Activated CD4-positive, alpha-beta T cell treated with anti-CD3 and anti-CD28 coated beads, Interleukin-2, amount 10 ng/mL, durations not matched to agents 24 days and 14 days (primary cell): ENCODE measurements at regions of chr9 and their contacts with region 1.

Region 1: DNA sequence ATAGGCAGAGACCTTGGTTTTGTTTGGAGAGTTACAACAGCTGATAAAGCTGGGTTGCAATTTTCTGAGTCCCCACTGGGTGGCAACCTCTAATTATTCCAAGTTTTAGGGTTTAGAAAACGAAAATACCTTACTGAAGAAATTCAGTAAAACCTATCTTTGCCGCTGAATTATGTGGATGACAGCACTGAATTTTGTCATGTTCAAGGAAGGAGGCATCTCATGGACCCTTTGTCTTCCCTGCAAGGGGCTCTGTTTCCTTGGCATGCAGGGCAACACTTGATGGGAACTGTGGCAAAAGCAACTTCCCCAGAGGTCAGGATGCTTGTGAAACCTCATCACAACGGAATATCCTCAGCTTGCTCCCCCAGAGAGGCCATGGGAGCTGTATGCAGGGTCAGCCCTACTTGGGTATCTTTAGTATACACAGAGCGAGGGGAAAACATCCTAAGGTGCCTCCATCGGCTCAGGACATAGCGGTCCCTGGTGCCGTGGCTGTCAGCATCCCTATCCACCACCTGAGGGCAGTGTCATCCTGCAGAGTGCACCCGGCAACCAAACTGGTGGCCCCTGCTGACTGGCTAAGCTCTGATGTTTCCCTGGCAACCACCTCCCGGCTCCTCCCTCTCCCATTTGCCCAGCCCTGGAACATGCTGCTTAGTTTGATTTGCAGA is 123.1 kb downstream of the RXRA start:
- DNase-seq: peak; percentile 91
- H3K4me3 Mint-ChIP-seq: no peak overlapping the region
- H3K27ac Mint-ChIP-seq: no peak overlapping the region
- H3K4me1 Mint-ChIP-seq: no peaks in the 10 kb centered on the region
- H3K27me3 Mint-ChIP-seq: peaks cover 3% of the 10 kb centered on the region

Region 2: DNA sequence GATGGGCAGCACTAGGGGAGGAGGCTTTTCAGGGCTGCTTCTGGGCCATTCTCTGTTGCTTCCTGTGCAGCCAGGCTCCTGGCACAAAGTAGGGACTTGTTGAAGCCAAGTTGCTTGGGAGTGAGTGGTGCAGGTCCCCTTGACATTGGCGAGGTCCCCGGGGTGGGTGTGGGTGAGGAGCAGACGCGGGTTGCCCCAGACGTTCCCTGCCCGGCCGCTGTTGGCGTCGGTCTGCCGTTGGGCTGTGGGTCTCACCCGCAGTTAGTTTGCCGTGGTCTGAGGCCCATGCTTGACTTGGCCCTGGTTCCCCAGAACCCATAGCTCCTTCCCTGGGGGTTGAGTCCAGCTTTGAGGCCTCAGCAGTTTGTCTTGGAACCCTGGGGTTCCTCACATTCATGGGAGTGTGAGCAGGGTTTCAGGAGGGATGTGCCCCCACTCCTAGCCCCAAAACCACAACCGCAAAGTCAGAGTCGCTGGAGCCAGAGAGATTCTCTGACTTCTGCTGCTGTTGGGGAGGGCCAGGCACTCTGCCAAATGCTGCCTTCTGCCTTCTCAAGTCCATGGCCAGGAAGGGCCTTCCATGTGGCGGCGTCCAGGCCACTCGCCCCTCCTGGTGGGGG is 45.6 kb before region 1 on chr9:
- intact Hi-C with region 1: no loop called
- DNase-seq: peak; percentile 69
- H3K4me3 Mint-ChIP-seq: no peak overlapping the region
- H3K27ac Mint-ChIP-seq: no peak overlapping the region
- H3K4me1 Mint-ChIP-seq: peaks cover 25% of the 10 kb centered on the region
- H3K27me3 Mint-ChIP-seq: peaks cover 12% of the 10 kb centered on the region

Region 3: DNA sequence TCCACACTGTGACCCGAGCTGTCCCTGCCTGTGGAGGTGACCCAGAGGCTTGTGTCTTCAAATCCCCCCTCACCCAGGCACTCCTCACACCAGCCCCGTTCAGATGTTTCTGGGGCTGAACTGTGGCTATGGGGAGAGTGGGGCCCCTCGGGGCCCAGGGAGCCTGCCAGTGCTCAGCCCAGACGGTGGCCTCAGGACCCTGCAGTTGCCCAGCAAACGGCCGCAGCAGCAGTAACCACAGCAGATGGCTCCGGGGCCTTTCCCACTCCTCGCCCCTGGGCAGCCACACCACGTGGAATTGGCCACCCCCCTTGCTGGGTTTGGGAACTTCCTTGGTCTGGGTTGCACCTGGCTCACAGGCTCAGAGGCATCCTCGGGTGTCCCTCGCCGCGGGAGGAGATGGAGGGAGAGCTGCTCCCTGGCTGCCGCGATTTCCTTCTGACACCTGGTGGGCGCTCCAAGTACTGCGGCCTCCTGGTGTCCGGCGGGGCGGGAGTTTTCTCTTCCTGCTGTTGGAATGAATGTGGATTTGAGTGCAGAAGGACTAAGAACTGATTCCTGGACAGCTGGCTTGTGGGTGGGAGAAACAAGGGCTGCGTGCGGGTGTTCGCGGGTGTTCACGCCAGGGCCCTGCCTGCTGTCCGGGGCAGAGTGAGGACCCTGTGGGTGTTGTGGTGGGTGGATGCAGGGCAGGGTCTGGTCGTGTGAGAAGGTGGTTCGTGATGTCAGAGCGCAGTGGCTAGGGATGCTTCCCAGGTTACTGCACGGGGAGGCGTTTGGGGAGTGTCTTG is 289.7 kb after region 1 on chr9:
- intact Hi-C with region 1: loop called (anchors 5 kb)
- DNase-seq: peak; percentile 77
- H3K4me3 Mint-ChIP-seq: no peak overlapping the region
- H3K27ac Mint-ChIP-seq: no peak overlapping the region
- H3K4me1 Mint-ChIP-seq: no peaks in the 10 kb centered on the region
- H3K27me3 Mint-ChIP-seq: no peaks in the 10 kb centered on the region